MCF 10A (cell line): ENCODE measurements at regions of chr1 and their contacts with region 1.

Region 1: DNA sequence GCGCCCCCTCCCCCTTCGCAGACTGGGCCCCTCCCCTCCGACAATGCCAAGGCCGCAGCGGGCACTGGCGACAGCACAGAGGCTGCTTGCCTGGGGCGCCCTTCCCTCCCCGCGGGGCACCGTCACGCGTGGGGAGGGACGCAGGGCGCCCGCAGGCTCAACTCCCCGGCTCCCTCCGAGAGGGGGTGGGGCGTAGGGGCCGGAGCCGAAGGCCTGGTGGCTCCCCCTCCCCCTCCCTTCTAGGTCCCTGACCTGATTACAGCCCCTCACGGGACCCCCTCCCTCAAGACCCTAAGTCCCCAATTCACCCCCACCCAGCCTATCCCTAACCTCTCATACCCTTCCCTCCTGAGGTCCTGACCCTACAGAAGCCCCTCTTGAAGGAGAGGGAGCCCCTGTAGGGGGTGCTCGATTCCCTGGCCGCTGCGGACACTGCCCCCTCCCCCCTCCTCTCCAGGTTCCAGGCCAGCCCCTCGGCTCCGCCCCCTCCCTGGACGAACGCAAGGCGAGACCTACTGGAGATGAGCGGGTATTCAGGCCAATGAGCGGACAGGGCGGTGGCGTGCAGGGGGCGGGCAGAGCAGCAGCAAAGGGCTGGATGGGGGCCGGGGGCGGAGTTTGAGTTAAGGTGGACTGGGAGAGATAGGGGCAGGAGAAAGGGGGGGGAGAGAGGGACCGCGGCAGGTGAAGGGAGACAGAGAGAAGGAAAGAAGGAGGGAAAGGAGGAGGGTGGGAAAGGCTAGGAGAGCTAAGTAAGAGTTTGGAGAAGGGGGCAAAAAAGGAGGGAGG is 733 bp upstream of the ZBTB7B start:
- DNase-seq: peak; percentile 100
- H3K4me3 Mint-ChIP-seq: peak overlapping the region; percentile 90
- H3K27ac Mint-ChIP-seq: peak overlapping the region; percentile 97
- H3K4me1 Mint-ChIP-seq: peaks cover 52% of the 10 kb centered on the region
- H3K27me3 Mint-ChIP-seq: no peaks in the 10 kb centered on the region
- CTCF ChIP-seq: peak; percentile 34

Region 2: DNA sequence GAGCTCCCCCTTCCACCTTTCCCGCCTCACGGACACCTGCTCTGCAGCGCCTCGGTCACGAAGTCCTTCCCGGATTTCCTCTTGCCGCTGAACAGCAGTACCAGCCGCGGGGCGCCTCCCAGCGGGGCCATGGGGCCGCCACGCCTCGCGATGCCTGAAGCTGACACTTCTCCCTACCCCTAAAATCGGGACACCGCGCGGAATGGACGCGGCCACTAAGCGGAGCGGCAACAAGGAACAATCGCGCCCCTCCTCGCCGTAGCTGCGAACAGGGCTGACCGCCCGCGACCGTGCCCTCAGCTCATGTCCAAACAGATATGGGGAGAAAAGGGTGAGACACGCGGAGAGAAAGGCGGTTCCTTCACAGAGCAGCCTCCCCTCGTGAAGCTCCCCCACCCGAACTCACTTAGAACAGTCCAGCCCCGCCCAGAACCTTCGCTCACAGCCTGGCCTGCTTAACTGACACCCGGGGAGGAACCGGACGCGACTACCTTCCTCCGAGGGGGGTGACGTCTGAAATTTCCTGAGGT is 65.2 kb before region 1 on chr1 and contains the start of gene PMVK:
- CTCF ChIA-PET with region 1: no interaction called
- POLR2A ChIA-PET with region 1: interaction called, 37 read pairs
- intact Hi-C with region 1: no loop called
- DNase-seq: peak; percentile 99
- H3K4me3 Mint-ChIP-seq: peak within 1 kb of the TSS; percentile 90
- H3K27ac Mint-ChIP-seq: peak within 1 kb of the TSS; percentile 100
- H3K4me1 Mint-ChIP-seq: peaks cover 49% of the 10 kb centered on the region
- H3K27me3 Mint-ChIP-seq: no peaks in the 10 kb centered on the region
- CTCF ChIP-seq: peak; percentile 26
- total RNA-seq, gene PMVK: 57.7 and 68.9 TPM in 2 replicates

Region 3: DNA sequence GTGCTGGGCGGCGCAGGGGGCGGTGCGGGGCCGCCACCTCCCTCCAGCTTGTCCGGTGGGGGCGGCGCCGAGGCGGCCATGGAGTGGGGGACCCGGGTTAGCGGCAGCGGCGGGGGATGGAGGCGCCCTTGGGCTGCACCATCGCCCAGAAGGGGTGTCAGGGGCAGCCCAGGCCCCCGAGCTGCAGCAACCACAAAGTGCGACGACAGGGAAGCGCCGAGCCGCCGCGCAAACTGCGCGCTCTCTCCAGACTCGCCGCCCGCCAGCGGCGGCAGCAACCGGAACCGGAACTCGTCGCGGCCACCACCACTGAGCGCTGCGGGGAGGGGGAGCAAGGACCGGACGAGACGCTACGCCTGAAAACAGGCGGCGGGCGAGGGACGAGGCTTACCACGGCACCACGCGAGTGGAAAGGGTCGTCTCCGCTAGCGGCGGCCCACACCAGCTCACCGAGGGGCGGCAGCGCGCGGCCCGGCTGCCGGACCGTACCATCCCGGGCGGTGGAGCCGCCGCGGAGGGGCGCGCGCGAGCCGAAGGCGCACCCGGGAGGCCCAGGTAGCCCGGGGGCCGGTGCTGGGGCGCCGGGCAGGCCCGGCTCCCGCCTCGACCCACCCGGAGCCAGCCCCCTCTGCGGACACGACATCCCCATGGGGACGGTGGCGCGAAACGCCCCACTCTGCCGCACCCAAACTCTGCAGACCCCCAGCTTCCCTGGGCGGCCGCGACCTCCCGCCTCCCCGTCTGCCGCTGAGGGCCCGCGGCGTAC is 40.2 kb before region 1 on chr1 and contains the start of gene PYGO2:
- CTCF ChIA-PET with region 1: interaction called, 33 read pairs
- POLR2A ChIA-PET with region 1: interaction called, 1,917 read pairs
- intact Hi-C with region 1: loop called (anchors 1 kb)
- DNase-seq: peak; percentile 85
- H3K4me3 Mint-ChIP-seq: peak within 1 kb of the TSS; percentile 73
- H3K27ac Mint-ChIP-seq: peak within 1 kb of the TSS; percentile 33
- H3K4me1 Mint-ChIP-seq: peaks cover 39% of the 10 kb centered on the region
- H3K27me3 Mint-ChIP-seq: no peaks in the 10 kb centered on the region
- CTCF ChIP-seq: peak; percentile 81
- total RNA-seq, gene PYGO2: 32.1 and 35.9 TPM in 2 replicates

Region 4: DNA sequence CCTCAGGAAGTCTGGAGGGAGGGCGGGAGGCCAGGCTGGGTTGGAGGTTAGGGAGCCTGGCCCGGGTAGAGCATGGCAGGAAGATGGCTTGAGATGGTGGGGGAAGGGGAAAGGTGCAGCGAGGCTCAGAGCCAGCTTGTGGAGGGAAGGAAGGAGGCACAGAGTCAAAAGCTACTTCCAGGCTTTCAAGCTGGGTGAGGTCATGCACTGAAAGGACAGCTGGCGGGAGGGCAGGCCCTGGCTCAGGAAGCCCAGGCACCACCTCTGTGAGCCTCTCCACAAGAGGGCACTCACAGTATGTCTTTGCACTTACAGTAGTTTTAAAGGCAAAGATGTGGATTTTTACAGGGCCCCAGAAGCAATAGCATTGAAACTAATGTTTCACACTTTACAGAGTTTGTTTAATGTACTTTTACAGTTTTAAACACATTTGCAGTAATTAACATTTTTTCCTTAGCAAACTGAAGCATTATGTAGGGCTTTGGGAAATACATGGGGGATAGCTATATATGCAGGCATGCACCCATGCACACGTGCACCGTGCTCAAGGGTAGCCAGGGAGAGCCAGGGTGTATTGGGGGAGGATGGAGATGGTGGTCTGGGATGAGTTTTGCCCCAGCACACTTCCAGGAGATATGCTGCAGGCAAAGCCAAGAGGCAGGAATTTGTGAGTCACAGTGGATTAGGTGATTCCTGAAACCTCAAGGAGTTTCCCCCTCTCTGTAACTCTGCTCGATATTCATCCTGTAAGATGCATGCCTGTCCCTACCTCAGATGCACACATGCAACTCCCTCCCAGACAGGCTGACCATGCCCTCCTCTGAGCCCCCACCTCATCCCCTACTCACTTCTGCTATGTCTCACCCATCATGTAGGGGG is 43.2 kb after region 1 on chr1:
- CTCF ChIA-PET with region 1: interaction called, 20 read pairs
- POLR2A ChIA-PET with region 1: interaction called, 51 read pairs
- intact Hi-C with region 1: loop called (anchors 2 kb)
- DNase-seq: peak; percentile 90
- H3K4me3 Mint-ChIP-seq: no peak overlapping the region
- H3K27ac Mint-ChIP-seq: no peak overlapping the region
- H3K4me1 Mint-ChIP-seq: peaks cover 37% of the 10 kb centered on the region
- H3K27me3 Mint-ChIP-seq: no peaks in the 10 kb centered on the region
- CTCF ChIP-seq: peak; percentile 83

Region 5: DNA sequence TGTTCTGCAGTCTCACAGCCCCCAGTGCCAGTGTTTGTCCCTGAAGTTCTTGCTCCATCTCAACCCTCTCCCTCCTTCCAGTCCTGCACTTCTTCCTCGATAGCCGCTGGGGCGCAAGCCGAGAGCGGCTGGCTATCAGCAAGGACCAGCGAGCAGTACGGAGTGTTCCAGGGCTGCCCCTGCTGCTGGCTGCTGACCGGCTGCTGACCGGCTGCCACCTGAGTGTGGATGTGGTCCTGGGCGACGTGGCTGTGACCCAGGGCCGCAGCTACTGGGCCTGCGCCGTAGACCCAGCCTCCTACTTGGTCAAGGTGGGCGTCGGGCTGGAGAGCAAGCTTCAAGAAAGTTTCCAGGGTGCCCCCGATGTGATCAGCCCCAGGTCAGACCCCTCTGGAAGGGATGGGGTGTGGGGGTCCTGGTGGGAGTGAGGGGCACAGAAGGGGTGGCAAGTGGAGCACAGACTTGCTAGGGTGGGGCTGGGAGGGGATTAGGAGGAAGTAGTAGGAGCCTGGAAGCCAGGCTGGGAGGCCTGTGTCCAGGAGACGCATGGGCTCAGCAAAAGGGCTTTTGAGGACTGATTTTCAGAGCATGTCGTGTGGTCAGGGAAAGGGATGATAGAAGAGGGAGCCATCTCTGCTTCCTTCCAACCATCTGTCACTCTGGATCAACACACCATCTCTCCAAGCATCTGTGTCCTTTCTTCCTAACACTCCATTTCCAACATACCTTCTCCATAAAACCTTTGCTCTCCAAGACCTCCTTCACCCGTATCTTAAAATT is 180.1 kb after region 1 on chr1:
- CTCF ChIA-PET with region 1: no interaction called
- POLR2A ChIA-PET with region 1: no interaction called
- intact Hi-C with region 1: no loop called
- DNase-seq: no peak
- H3K4me3 Mint-ChIP-seq: no peak overlapping the region
- H3K27ac Mint-ChIP-seq: no peak overlapping the region
- H3K4me1 Mint-ChIP-seq: peaks cover 18% of the 10 kb centered on the region
- H3K27me3 Mint-ChIP-seq: no peaks in the 10 kb centered on the region
- CTCF ChIP-seq: no peak